K562 (cell line): ENCODE measurements at regions of chr1 and their contacts with region 1.

Region 1: DNA sequence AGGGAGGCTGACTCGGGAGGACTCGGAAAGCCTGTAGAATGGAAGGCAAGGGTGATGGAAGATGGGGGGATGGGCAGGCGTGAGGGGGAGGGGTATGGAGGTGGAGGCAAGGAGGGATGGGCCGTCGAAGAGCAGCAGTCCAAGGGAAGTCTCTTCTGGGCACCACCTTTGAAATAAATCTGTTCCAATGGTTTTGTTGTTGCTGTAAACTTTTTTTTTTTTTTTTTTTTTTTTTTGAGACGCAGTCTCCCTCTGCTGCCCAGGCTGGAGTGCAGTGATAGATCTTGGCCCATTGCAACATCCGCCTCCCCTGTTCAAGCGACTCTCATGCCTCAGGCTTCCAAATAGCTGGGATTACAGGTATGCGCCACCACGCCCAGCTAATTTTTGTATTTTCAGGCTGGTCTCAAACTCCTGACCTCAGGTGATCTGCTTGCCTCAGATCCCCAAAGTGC is 79.0 kb upstream of the SLC45A1 start:
- DNase-seq: no peak
- ATAC-seq: peak; percentile 65; the same call in 2 of the 3 replicates
- H3K4me3 ChIP-seq: no peak overlapping the region
- H3K27ac ChIP-seq: no peak overlapping the region
- H3K4me1 ChIP-seq: no peaks in the 10 kb centered on the region; a peak in 1 of 5 replicates
- H3K27me3 ChIP-seq: peaks cover 27 to 55% of the 10 kb centered on the region in 2 experiments
- CTCF ChIP-seq: peak in 2 of 3 experiments; percentile 13 to 40; a peak in 3 of 6 replicates
- EP300 ChIP-seq: no peak
- POLR2A ChIP-seq: no peak
- RAD21 ChIP-seq: peak in 1 of 2 experiments; percentile 20; a peak in 1 of 4 replicates

Region 2: GRCh38 chr1:7667625-7668218 is 571.2 kb before region 1 on chr1:
- CTCF ChIA-PET with region 1: no interaction called
- POLR2A ChIA-PET with region 1: no interaction called
- in situ Hi-C with region 1: no loop called
- intact Hi-C with region 1: no loop called
- DNase-seq: peak; percentile 82 to 85 (median 84)
- ATAC-seq: peak; percentile 85
- H3K4me3 ChIP-seq: no peak overlapping the region
- H3K27ac ChIP-seq: no peak overlapping the region
- H3K4me1 ChIP-seq: peaks cover 0 to 35% of the 10 kb centered on the region in 2 experiments; a peak in 2 of 5 replicates
- H3K27me3 ChIP-seq: peaks cover 27 to 58% of the 10 kb centered on the region in 2 experiments; a peak in 4 of 5 replicates
- CTCF ChIP-seq: peak; percentile 99
- EP300 ChIP-seq: no peak
- POLR2A ChIP-seq: no peak
- RAD21 ChIP-seq: peak; percentile 94 to 98

Region 3: GRCh38 chr1:8031176-8031785 is 207.6 kb before region 1 on chr1:
- CTCF ChIA-PET with region 1: interaction called, 13 read pairs
- POLR2A ChIA-PET with region 1: no interaction called
- in situ Hi-C with region 1: no loop called
- intact Hi-C with region 1: loop called (anchors 5 kb)
- DNase-seq: peak in 2 of 4 experiments; percentile 38 to 42
- ATAC-seq: no peak
- H3K4me3 ChIP-seq: no peak overlapping the region
- H3K27ac ChIP-seq: no peak overlapping the region
- H3K4me1 ChIP-seq: peaks cover 0 to 5% of the 10 kb centered on the region in 2 experiments; a peak in 4 of 5 replicates
- H3K27me3 ChIP-seq: peaks cover 17 to 31% of the 10 kb centered on the region in 2 experiments; a peak in 4 of 5 replicates
- CTCF ChIP-seq: peak in 2 of 3 experiments; percentile 57 to 91; a peak in 4 of 6 replicates
- EP300 ChIP-seq: no peak
- POLR2A ChIP-seq: no peak
- RAD21 ChIP-seq: peak; percentile 89 to 94